CD4-positive, alpha-beta memory T cell (primary cell): ENCODE measurements at regions of chr21 and their contacts with region 1.

Region 1: DNA sequence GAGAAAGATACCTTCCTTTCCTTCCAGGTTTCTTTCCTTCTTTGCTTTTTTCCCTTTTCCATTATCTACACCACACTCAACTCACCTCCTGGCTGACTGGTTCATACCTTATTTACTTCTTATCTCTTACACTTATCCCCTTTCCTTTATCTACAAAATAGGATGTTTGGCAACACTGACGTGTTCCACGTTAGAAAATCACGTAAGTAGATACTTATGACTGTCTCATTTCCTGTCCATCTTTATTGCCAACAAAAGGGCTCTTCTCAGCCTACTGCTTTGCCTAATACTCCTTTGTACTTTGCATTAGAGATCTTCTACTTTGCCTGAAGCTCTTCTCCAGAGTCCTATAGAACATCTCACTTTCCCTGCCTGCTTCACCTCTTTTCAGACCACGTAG is 25.1 kb downstream of the SYNJ1 start:
- DNase-seq: no peak
- H3K4me3 ChIP-seq: no peak overlapping the region
- H3K4me3 Mint-ChIP-seq: no peak overlapping the region
- H3K27ac ChIP-seq: no peak overlapping the region
- H3K27ac Mint-ChIP-seq: peak overlapping the region in 6 of 7 donors; percentile 5 to 88 (median 42)
- H3K4me1 ChIP-seq: no peaks in the 10 kb centered on the region
- H3K4me1 Mint-ChIP-seq: peaks cover 25 to 32% (median 28%) of the 10 kb centered on the region in 4 donors
- H3K27me3 ChIP-seq: no peaks in the 10 kb centered on the region
- H3K27me3 Mint-ChIP-seq: no peaks in the 10 kb centered on the region

Region 2: GRCh38 chr21:32537569-32537881 is 165.2 kb before region 1 on chr21:
- CTCF ChIA-PET with region 1: no interaction called
- POLR2A ChIA-PET with region 1: no interaction called
- intact Hi-C with region 1: no loop called
- DNase-seq: no peak
- H3K4me3 ChIP-seq: no peak overlapping the region
- H3K4me3 Mint-ChIP-seq: peak overlapping the region in 2 of 8 donors; percentile 3 to 29
- H3K27ac ChIP-seq: no peak overlapping the region
- H3K27ac Mint-ChIP-seq: peak overlapping the region in 1 of 7 donors; percentile 39
- H3K4me1 ChIP-seq: peaks cover 15% of the 10 kb centered on the region
- H3K4me1 Mint-ChIP-seq: peaks cover 12 to 26% (median 19%) of the 10 kb centered on the region in 4 donors
- H3K27me3 ChIP-seq: no peaks in the 10 kb centered on the region
- H3K27me3 Mint-ChIP-seq: no peaks in the 10 kb centered on the region

Region 3: GRCh38 chr21:32666258-32666657 is 36.4 kb before region 1 on chr21:
- CTCF ChIA-PET with region 1: no interaction called
- POLR2A ChIA-PET with region 1: no interaction called
- intact Hi-C with region 1: loop called (anchors 2 kb)
- DNase-seq: no peak
- H3K4me3 ChIP-seq: no peak overlapping the region
- H3K4me3 Mint-ChIP-seq: no peak overlapping the region
- H3K27ac ChIP-seq: no peak overlapping the region
- H3K27ac Mint-ChIP-seq: no peak overlapping the region
- H3K4me1 ChIP-seq: no peaks in the 10 kb centered on the region
- H3K4me1 Mint-ChIP-seq: no peaks in the 10 kb centered on the region
- H3K27me3 ChIP-seq: no peaks in the 10 kb centered on the region
- H3K27me3 Mint-ChIP-seq: no peaks in the 10 kb centered on the region